ENCODE measurements at regions of chr1 and their contacts with region 1.

Region 1: DNA sequence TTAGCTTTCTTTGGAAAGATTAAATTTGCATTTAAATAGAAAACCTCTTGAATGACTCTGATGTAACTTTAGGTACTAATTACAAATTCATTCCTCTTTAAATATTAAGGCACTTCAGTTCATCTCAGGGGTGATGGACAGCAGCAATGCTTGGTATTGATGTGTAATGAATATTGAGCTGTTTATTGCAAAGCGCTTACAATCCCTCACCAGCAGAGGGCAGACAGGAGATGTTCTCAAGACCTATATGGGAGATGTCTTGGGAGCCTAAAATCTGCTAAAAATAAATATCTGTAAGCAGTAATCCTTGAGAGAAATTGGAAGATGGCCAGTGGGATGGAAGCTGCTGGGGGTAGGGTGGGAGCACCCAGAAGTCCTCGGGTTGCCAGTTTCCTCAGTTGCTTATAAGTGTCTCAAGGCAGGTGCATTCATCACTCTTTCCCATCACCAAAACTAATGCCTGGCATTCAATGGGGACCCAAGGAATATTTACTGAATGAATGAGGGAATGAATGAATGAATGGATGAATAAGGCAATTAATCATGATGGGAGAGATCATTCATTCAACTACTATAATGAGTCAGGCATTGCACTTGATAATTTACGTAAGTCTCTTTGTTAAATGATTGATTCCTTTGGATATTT is 2.3 kb downstream of the KLHDC8A start:
- DNase-seq: peak; percentile 74
- ATAC-seq: peak; percentile 72
- H3K4me3 Mint-ChIP-seq: no peak overlapping the region
- H3K27ac Mint-ChIP-seq: no peak overlapping the region
- H3K4me1 Mint-ChIP-seq: no peaks in the 10 kb centered on the region
- H3K27me3 Mint-ChIP-seq: peaks cover 23% of the 10 kb centered on the region

Region 2: DNA sequence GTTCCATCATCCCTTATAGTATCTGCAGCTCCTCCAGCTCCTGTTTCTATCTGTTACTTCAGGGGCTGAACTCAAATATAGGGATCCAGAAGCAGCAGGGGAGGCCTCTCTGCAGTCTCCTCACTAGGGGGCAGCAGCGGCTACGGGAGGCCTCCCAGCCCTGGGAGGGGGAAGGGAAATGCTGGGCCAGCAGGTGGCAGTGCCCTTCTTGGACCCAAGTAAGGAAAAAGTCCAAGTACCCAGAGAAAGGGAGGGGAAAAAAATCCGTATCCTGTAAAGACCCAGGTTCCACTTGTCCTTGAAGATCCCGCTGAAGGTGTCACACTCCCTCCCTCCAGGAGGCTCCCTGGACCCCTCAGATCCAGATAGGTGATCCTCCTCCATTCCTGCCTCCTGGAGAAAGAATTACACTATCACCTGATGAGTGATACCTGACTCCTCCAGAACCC is 18.7 kb before region 1 on chr1:
- CTCF ChIA-PET with region 1: interaction called, 25 read pairs
- DNase-seq: peak; percentile 84
- ATAC-seq: peak; percentile 82
- H3K4me3 Mint-ChIP-seq: no peak overlapping the region
- H3K27ac Mint-ChIP-seq: no peak overlapping the region
- H3K4me1 Mint-ChIP-seq: peaks cover 18% of the 10 kb centered on the region
- H3K27me3 Mint-ChIP-seq: peaks cover 46% of the 10 kb centered on the region

Region 3: GRCh38 chr1:205365945-205366463 is 11.6 kb after region 1 on chr1:
- CTCF ChIA-PET with region 1: interaction called, 11 read pairs
- DNase-seq: no peak
- ATAC-seq: no peak
- H3K4me3 Mint-ChIP-seq: no peak overlapping the region
- H3K27ac Mint-ChIP-seq: no peak overlapping the region
- H3K4me1 Mint-ChIP-seq: no peaks in the 10 kb centered on the region
- H3K27me3 Mint-ChIP-seq: peaks cover 13% of the 10 kb centered on the region

Region 4: DNA sequence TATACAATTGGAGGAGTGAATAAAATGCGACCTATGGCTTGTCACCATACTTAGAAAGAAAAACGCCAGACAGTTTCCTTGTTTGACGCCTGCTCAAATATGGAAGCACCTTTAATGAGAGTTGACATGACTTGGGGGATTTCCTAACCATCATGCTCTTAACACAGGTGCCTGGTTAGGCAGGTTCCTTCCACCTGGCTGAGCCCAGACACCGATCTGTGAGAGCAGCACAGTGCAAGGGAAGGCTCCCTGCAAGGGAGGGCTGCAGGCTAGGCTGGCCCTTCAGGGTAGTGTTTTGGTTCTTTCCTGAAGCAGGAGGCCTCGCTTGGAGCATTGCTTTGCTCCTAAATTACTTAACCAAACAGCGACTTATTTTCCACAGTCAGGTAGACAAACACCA is 26.9 kb after region 1 on chr1:
- CTCF ChIA-PET with region 1: interaction called, 10 read pairs
- DNase-seq: no peak
- ATAC-seq: no peak
- H3K4me3 Mint-ChIP-seq: no peak overlapping the region
- H3K27ac Mint-ChIP-seq: no peak overlapping the region
- H3K4me1 Mint-ChIP-seq: no peaks in the 10 kb centered on the region
- H3K27me3 Mint-ChIP-seq: peaks cover 35% of the 10 kb centered on the region

Region 5: DNA sequence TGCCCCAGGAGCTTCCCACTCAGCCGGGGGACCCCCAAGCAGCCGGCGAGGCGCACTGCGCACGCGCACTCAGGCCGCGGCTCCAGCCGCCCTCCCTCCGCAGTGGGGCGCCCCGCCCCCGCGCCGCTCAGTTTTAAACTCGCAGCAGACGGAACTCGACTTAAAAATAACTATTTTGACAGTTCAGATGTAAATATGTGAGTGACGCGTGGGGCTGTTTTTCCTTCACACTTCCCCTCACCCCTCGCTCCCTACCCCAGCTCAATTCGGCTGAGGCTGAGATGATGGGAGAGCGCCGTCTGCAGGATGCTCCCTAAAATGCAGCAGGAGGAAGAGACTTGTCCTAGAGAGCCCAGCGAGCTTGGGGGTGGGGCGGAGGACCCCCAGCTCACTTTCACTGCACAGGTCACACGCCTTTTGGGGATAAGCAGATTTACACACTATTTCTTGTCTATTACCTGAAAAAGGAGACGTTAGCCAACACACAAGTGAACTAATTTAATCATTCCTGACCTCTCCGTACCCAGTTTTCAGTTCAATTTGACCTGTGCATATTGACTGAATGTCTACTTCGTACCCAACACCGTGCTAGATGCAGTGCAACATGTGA is 76.4 kb after region 1 on chr1:
- CTCF ChIA-PET with region 1: interaction called, 20 read pairs
- DNase-seq: peak; percentile 57
- ATAC-seq: peak; percentile 80
- H3K4me3 Mint-ChIP-seq: peak overlapping the region; percentile 70
- H3K27ac Mint-ChIP-seq: peak overlapping the region; percentile 38
- H3K4me1 Mint-ChIP-seq: peaks cover 9% of the 10 kb centered on the region
- H3K27me3 Mint-ChIP-seq: peaks cover 24% of the 10 kb centered on the region